ENCODE measurements at regions of chr7 and their contacts with region 1.

Region 1: GRCh38 chr7:71601851-71602250 is 469.9 kb downstream of the GALNT17 start:
- DNase-seq: no peak
- H3K4me3 ChIP-seq: no peak overlapping the region
- H3K27ac ChIP-seq: no peak overlapping the region
- H3K4me1 ChIP-seq: no peaks in the 10 kb centered on the region
- H3K27me3 ChIP-seq: no peaks in the 10 kb centered on the region
- CTCF ChIP-seq: no peak
- POLR2A ChIP-seq: no peak

Region 2: GRCh38 chr7:71560354-71560995 is 41.4 kb before region 1 on chr7:
- intact Hi-C with region 1: loop called (anchors 1 kb)
- DNase-seq: no peak
- H3K4me3 ChIP-seq: no peak overlapping the region
- H3K27ac ChIP-seq: no peak overlapping the region
- H3K4me1 ChIP-seq: no peaks in the 10 kb centered on the region
- H3K27me3 ChIP-seq: no peaks in the 10 kb centered on the region
- CTCF ChIP-seq: no peak
- POLR2A ChIP-seq: no peak